Activated T-helper 2 cell treated with anti-CD3 and anti-CD28 coated beads, Interferon-gamma antibody, Interleukin-2, Interleukin-4, amounts not matched to agents 10 μg/mL and 5 μg/mL and 100 μg/mL, durations not matched to agents 14 hours and 24 hours and 36 hours (primary cell): ENCODE measurements at regions of chr6 and their contacts with region 1.

Region 1: DNA sequence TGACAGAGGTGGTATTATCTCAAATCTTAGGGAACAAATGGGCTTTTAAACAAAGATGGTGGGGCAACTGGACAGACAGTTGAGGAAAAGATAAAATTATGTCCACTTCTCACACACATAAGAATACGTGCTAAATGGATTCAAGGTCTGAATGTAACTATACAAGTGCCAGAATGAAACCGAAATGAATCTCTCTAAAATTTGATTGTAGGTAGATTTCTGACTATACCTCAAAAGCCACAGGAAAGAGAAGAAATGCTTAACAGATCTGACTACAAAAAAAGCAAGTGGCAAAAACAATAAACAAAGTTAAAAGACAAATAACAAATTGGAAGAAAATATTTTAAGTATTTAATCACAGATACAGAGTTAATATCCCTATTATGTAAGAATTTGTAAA is 182.7 kb upstream of the OLIG3 start:
- DNase-seq: no peak
- H3K4me3 Mint-ChIP-seq: peak overlapping the region; percentile 67
- H3K27ac Mint-ChIP-seq: peak overlapping the region; percentile 89
- H3K4me1 Mint-ChIP-seq: peaks cover 55% of the 10 kb centered on the region
- H3K27me3 Mint-ChIP-seq: peaks cover 5% of the 10 kb centered on the region

Region 2: GRCh38 chr6:137657351-137658011 is 19.4 kb before region 1 on chr6:
- intact Hi-C with region 1: loop called (anchors 1 kb)
- DNase-seq: peak; percentile 34
- H3K4me3 Mint-ChIP-seq: no peak overlapping the region
- H3K27ac Mint-ChIP-seq: peak overlapping the region; percentile 65
- H3K4me1 Mint-ChIP-seq: peaks cover 32% of the 10 kb centered on the region
- H3K27me3 Mint-ChIP-seq: no peaks in the 10 kb centered on the region

Region 3: GRCh38 chr6:137666202-137666774 is 10.6 kb before region 1 on chr6:
- intact Hi-C with region 1: loop called (anchors 1 kb)
- DNase-seq: no peak
- H3K4me3 Mint-ChIP-seq: no peak overlapping the region
- H3K27ac Mint-ChIP-seq: peak overlapping the region; percentile 57
- H3K4me1 Mint-ChIP-seq: peaks cover 29% of the 10 kb centered on the region
- H3K27me3 Mint-ChIP-seq: peaks cover 13% of the 10 kb centered on the region

Region 4: GRCh38 chr6:137699031-137699683 is 22.3 kb after region 1 on chr6:
- intact Hi-C with region 1: loop called (anchors 1 kb)
- DNase-seq: no peak
- H3K4me3 Mint-ChIP-seq: peak overlapping the region; percentile 64
- H3K27ac Mint-ChIP-seq: peak overlapping the region; percentile 98
- H3K4me1 Mint-ChIP-seq: peaks cover 52% of the 10 kb centered on the region
- H3K27me3 Mint-ChIP-seq: no peaks in the 10 kb centered on the region

Region 5: DNA sequence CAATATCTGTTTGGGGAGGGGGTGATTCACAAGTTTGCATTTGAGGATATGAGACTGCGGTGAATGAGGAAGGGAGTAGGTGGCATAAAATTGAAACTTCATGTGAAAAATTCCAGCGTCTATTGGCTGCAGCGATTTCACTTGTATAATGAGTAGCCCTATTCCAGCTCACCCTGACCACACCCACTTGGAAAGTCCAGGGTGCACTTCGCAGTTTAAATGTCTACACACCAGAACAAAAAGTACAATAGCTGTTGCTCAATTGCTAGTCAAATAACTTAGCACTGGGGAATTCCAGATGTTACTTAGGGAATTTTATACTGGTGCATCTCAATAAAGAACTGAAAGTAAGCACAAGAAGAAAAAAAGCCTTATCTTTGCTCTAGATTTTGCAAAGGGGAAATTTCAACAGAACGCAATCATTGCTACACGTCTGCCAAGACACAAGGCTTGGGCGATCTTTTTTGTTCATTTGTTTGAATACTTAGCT is 196.4 kb after region 1 on chr6:
- intact Hi-C with region 1: loop called (anchors 1 kb)
- DNase-seq: peak; percentile 44
- H3K4me3 Mint-ChIP-seq: peak overlapping the region; percentile 96
- H3K27ac Mint-ChIP-seq: peak overlapping the region; percentile 96
- H3K4me1 Mint-ChIP-seq: peaks cover 52% of the 10 kb centered on the region
- H3K27me3 Mint-ChIP-seq: no peaks in the 10 kb centered on the region

Region 6: DNA sequence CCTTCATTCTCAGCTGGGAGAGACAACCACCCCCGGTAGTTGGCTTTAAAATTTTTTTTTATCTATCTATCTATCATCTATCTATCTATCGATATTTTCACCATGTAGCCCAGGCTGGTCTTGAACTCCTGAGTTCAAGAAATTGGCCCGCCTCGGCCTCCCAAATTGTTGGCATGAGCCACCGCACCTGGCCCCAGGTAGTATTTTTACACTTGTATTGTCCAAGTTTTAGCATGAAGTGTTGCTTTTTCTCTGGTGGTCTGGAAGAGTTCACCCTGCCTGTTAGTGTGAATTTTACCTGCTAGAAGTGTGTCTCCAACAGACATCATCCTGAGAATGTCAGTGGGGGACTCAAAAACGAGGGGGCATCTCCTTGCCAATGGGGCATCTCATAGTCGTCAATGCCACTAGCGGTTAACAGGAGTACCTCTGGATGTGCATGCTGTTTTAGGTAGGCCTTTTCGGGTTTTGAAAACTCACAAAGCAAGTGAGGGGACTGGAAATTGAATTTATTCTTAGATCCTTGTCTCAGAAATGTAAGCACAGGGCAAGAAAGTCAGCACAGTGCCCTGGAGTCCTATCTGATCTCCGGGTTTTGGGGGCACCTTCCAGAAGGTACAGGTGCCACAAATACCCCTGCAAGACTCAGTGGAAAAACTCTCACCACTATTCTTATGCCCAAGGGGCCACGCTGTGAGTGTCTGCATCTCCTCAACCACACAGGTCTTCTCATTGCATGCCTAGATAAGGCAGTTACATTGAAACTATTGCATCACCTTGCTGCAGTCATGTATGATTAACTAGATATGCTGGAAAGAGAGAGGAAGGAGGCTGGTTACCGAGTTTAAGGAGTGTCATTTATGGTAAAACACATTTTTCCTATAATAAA is 227.3 kb after region 1 on chr6:
- intact Hi-C with region 1: loop called (anchors 1 kb)
- DNase-seq: peak; percentile 44
- H3K4me3 Mint-ChIP-seq: peak overlapping the region; percentile 61
- H3K27ac Mint-ChIP-seq: peak overlapping the region; percentile 97
- H3K4me1 Mint-ChIP-seq: peaks cover 62% of the 10 kb centered on the region
- H3K27me3 Mint-ChIP-seq: no peaks in the 10 kb centered on the region

Region 7: GRCh38 chr6:137975188-137975940 is 298.5 kb after region 1 on chr6:
- intact Hi-C with region 1: loop called (anchors 1 kb)
- DNase-seq: peak; percentile 26
- H3K4me3 Mint-ChIP-seq: peak overlapping the region; percentile 72
- H3K27ac Mint-ChIP-seq: peak overlapping the region; percentile 93
- H3K4me1 Mint-ChIP-seq: peaks cover 57% of the 10 kb centered on the region
- H3K27me3 Mint-ChIP-seq: no peaks in the 10 kb centered on the region